ENCODE measurements at regions of chr9 and their contacts with region 1.

Region 1: GRCh38 chr9:121640076-121640475 is 11.4 kb upstream of the DAB2IP start:
- DNase-seq: no peak
- ATAC-seq: peak; percentile 88
- H3K4me3 ChIP-seq: no peak overlapping the region
- H3K27ac ChIP-seq: no peak overlapping the region
- H3K4me1 ChIP-seq: peaks cover 16 to 24% of the 10 kb centered on the region in 2 experiments
- H3K27me3 ChIP-seq: no peaks in the 10 kb centered on the region
- CTCF ChIP-seq: peak; percentile 53 to 74 (median 74); a peak in 5 of 6 replicates
- POLR2A ChIP-seq: no peak
- RAD21 ChIP-seq: peak; percentile 79

Region 2: GRCh38 chr9:121650217-121651007 is 10.3 kb after region 1 on chr9:
- CTCF ChIA-PET with region 1: interaction called, 12 read pairs
- POLR2A ChIA-PET with region 1: no interaction called
- RAD21 ChIA-PET with region 1: no interaction called
- intact Hi-C with region 1: no loop called
- DNase-seq: no peak
- ATAC-seq: peak; percentile 67
- H3K4me3 ChIP-seq: peak overlapping the region; percentile 59 to 65
- H3K27ac ChIP-seq: peak overlapping the region; percentile 49; the same call in 1 of the 2 replicates
- H3K4me1 ChIP-seq: peaks cover 42 to 56% of the 10 kb centered on the region in 2 experiments
- H3K27me3 ChIP-seq: no peaks in the 10 kb centered on the region
- CTCF ChIP-seq: no peak
- POLR2A ChIP-seq: no peak
- RAD21 ChIP-seq: no peak